ENCODE measurements at regions of chr11 and their contacts with region 1.

Region 1: GRCh38 chr11:32176223-32176934 is 85.5 kb downstream of the RCN1 start:
- DNase-seq: peak; percentile 10
- H3K4me3 ChIP-seq: no peak overlapping the region
- CTCF ChIP-seq: peak; percentile 79

Region 2: GRCh38 chr11:31240338-31240904 is 936.0 kb before region 1 on chr11:
- CTCF ChIA-PET with region 1: interaction called, 78 read pairs
- POLR2A ChIA-PET with region 1: no interaction called
- DNase-seq: no peak
- H3K4me3 ChIP-seq: no peak overlapping the region
- CTCF ChIP-seq: peak; percentile 31

Region 3: GRCh38 chr11:31397239-31397834 is 779.0 kb before region 1 on chr11:
- CTCF ChIA-PET with region 1: interaction called, 14 read pairs
- POLR2A ChIA-PET with region 1: no interaction called
- DNase-seq: no peak
- H3K4me3 ChIP-seq: no peak overlapping the region
- CTCF ChIP-seq: peak; percentile 30

Region 4: DNA sequence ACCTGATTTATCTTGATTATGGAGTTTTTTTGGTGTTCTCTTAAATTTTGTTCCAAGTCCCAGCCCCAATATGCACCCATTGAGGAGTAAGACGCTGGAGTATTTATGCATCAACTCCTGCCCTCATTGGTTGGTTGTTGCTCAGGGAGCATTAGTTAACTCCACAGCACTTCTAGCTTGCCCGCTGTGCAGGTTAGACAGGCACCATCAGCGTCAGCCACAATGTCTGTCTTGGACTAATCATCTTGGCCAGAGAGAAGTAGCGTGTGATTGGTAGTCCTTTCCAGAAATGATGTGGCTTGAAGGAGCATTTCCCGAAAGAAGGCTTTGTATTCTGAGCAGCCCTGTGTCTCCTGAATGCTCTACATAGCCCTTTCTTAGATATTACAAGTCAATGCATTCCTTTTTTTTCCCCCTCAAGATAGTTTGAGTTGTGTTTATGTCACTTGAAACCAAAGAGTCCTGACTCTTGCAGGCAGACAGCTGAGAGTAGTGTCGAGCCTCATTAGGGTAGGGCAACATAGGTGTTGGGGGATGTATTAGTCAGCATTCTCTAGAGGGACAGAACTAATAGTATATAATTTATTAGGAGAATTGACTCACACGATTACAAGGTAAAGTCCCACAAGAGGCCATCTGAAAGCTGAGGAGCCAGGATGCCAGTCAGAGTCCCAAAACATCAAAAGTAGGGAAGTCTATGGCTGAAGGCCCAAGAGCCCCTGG is 180.1 kb before region 1 on chr11:
- CTCF ChIA-PET with region 1: no interaction called
- POLR2A ChIA-PET with region 1: no interaction called
- DNase-seq: no peak
- H3K4me3 ChIP-seq: no peak overlapping the region
- CTCF ChIP-seq: no peak

Region 5: DNA sequence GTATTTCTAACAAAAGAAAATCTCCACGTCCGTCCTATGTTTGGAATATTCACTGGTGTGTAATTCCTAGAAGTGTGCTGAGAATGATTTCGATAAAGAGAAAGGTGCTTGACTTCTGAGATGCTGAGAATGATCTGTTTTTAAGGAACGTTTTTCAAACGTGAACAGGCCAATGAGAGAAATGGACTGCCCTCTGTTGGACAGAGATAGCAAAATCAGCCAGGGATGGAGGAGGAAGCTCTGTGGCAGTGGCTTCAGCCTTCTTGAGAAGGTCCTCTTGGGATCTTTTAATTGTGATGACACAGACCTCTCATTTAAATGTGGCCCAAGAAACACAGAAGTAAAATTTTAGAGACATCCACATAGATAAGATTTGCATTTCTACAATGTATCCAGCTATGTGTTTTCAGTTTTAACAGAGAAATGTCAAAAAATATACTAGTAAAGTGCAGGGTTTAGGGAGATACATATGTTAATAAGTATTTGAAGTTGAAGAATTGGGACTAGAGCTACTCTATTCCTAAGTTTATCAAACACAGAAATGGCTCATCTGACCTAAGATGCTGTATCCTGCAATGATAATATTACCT is 169.5 kb before region 1 on chr11:
- CTCF ChIA-PET with region 1: interaction called, 23 read pairs
- POLR2A ChIA-PET with region 1: no interaction called
- DNase-seq: peak; percentile 5
- H3K4me3 ChIP-seq: no peak overlapping the region
- CTCF ChIP-seq: peak; percentile 80

Region 6: GRCh38 chr11:32052218-32052617 is 124.2 kb before region 1 on chr11:
- CTCF ChIA-PET with region 1: interaction called, 425 read pairs
- POLR2A ChIA-PET with region 1: no interaction called
- DNase-seq: no peak
- H3K4me3 ChIP-seq: no peak overlapping the region
- CTCF ChIP-seq: peak; percentile 58

Region 7: GRCh38 chr11:32090545-32091373 is 85.6 kb before region 1 on chr11 and contains the start of gene RCN1:
- CTCF ChIA-PET with region 1: interaction called, 13 read pairs
- POLR2A ChIA-PET with region 1: no interaction called
- DNase-seq: no peak
- H3K4me3 ChIP-seq: peak within 1 kb of the TSS; percentile 82
- CTCF ChIP-seq: no peak

Region 8: DNA sequence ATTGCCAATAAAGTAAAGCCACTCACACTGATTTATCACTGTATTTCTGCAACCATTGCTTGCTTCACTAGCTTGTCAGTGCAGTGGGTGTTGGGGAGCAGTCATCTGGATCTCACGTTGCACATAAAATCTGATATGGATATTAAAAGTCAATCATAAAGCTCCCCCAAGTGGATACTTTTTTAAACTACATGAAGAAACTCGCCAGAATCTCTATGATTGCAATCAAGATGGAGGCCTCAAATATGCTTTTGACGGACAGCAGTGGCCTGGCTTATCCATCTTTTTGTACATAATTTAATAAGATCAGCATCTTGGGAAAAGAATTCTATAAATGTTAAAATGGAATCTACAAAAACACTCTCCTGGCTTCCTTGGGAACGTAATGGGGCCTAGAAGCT is 121.2 kb after region 1 on chr11:
- CTCF ChIA-PET with region 1: interaction called, 17 read pairs
- POLR2A ChIA-PET with region 1: no interaction called
- DNase-seq: no peak
- H3K4me3 ChIP-seq: no peak overlapping the region
- CTCF ChIP-seq: no peak

Measured in AG04449 (cell line).